PC-3 (cell line): ENCODE measurements at regions of chr2 and their contacts with region 1.

Region 1: GRCh38 chr2:219206442-219207253 is at the start of gene ZFAND2B:
- DNase-seq: peak; percentile 97
- ATAC-seq: peak; percentile 93
- H3K4me3 ChIP-seq: peak within 1 kb of the TSS; percentile 66
- H3K27ac ChIP-seq: peak within 1 kb of the TSS; percentile 69
- H3K4me1 ChIP-seq: peaks cover 20% of the 10 kb centered on the region
- H3K27me3 ChIP-seq: no peaks in the 10 kb centered on the region
- CTCF ChIP-seq: no peak
- total RNA-seq, gene ZFAND2B: 47.5 and 49.5 TPM in 2 replicates

Region 2: DNA sequence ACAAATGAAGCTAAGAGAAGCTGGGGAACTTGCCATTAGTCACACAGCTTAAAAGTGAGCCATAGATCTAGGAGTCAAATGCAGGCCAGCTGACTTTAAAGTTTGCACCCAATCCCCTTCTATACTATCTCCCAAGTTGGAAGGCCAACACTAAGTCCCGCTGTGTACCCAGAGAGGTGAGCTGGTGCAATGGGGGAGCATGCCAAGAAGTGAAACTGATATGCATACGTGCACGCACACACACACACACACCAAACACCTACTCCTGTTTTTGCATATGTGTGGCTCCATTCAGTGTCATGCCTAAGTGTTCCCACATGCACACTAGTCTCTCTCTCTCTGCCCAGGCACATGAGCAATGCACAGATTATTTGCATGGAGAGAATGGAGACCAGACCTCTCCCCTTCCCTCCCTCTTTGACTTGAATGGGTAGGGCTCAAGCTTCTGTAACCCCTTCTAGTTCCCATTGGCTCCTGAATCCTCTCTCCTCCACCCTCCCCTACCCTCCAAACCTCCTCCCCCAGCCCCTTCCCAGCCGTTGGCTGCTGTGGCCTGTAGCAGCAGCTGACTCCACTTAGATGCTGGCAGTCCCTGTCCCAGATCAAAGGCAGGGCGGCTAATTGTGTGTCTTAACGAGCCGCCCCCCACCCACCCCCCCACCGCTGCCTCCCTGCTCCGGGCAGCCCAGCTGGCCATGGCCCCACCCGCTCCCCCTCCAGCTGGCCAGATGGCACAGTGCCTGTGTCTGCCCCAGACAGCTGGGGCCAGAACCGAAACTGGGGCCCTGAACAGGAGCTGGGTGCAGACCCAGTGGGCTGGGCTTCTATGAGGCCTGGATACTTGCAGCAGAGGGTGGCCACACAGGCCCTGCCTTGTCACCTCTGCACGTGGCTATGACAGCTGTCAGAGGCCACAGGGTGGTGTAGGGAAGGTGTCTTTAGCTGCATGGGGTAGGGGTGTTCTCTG is 320.4 kb before region 1 on chr2:
- CTCF ChIA-PET with region 1: no interaction called
- POLR2A ChIA-PET with region 1: no interaction called
- intact Hi-C with region 1: no loop called
- DNase-seq: no peak
- ATAC-seq: no peak
- H3K4me3 ChIP-seq: no peak overlapping the region
- H3K27ac ChIP-seq: no peak overlapping the region
- H3K4me1 ChIP-seq: no peaks in the 10 kb centered on the region
- H3K27me3 ChIP-seq: no peaks in the 10 kb centered on the region
- CTCF ChIP-seq: no peak

Region 3: GRCh38 chr2:219126551-219126950 is 80.1 kb before region 1 on chr2:
- CTCF ChIA-PET with region 1: no interaction called
- POLR2A ChIA-PET with region 1: no interaction called
- intact Hi-C with region 1: no loop called
- DNase-seq: peak; percentile 76
- ATAC-seq: peak; percentile 64
- H3K4me3 ChIP-seq: no peak overlapping the region
- H3K27ac ChIP-seq: peak overlapping the region; percentile 76
- H3K4me1 ChIP-seq: peaks cover 70% of the 10 kb centered on the region
- H3K27me3 ChIP-seq: no peaks in the 10 kb centered on the region
- CTCF ChIP-seq: no peak

Region 4: GRCh38 chr2:219160186-219161017 is 46.2 kb before region 1 on chr2 and contains the start of gene NHEJ1:
- CTCF ChIA-PET with region 1: no interaction called
- POLR2A ChIA-PET with region 1: interaction called, 4 read pairs
- intact Hi-C with region 1: loop called (anchors 1 kb)
- DNase-seq: peak; percentile 92
- ATAC-seq: peak; percentile 91
- H3K4me3 ChIP-seq: peak within 1 kb of the TSS; percentile 79
- H3K27ac ChIP-seq: peak within 1 kb of the TSS; percentile 62
- H3K4me1 ChIP-seq: peaks cover 26% of the 10 kb centered on the region
- H3K27me3 ChIP-seq: no peaks in the 10 kb centered on the region
- CTCF ChIP-seq: peak; percentile 90
- total RNA-seq, gene NHEJ1: 16.7 and 18.5 TPM in 2 replicates

Region 5: GRCh38 chr2:219177552-219178376 is 28.9 kb before region 1 on chr2 and contains the start of gene RETREG2:
- CTCF ChIA-PET with region 1: no interaction called
- POLR2A ChIA-PET with region 1: interaction called, 3 read pairs
- intact Hi-C with region 1: loop called (anchors 1 kb)
- DNase-seq: peak; percentile 87
- ATAC-seq: peak; percentile 70
- H3K4me3 ChIP-seq: peak within 1 kb of the TSS; percentile 83
- H3K27ac ChIP-seq: peak within 1 kb of the TSS; percentile 94
- H3K4me1 ChIP-seq: peaks cover 24% of the 10 kb centered on the region
- H3K27me3 ChIP-seq: no peaks in the 10 kb centered on the region
- CTCF ChIP-seq: no peak; the same call in 1 of the 2 replicates
- total RNA-seq, gene RETREG2: 61.0 and 87.2 TPM in 2 replicates

Region 6: GRCh38 chr2:219218732-219219701 is 12.4 kb after region 1 on chr2 and contains the start of gene ABCB6:
- CTCF ChIA-PET with region 1: no interaction called
- POLR2A ChIA-PET with region 1: no interaction called
- intact Hi-C with region 1: loop called (anchors 1 kb)
- DNase-seq: peak; percentile 83
- ATAC-seq: peak; percentile 66
- H3K4me3 ChIP-seq: peak within 1 kb of the TSS; percentile 69
- H3K27ac ChIP-seq: peak within 1 kb of the TSS; percentile 77
- H3K4me1 ChIP-seq: peaks cover 19% of the 10 kb centered on the region
- H3K27me3 ChIP-seq: no peaks in the 10 kb centered on the region
- CTCF ChIP-seq: no peak
- total RNA-seq, gene ABCB6: 21.1 and 23.9 TPM in 2 replicates

Region 7: GRCh38 chr2:219369447-219369861 is 162.8 kb after region 1 on chr2:
- CTCF ChIA-PET with region 1: interaction called, 11 read pairs
- POLR2A ChIA-PET with region 1: no interaction called
- intact Hi-C with region 1: no loop called
- DNase-seq: peak; percentile 42
- ATAC-seq: peak; percentile 46
- H3K4me3 ChIP-seq: no peak overlapping the region
- H3K27ac ChIP-seq: no peak overlapping the region
- H3K4me1 ChIP-seq: no peaks in the 10 kb centered on the region
- H3K27me3 ChIP-seq: no peaks in the 10 kb centered on the region
- CTCF ChIP-seq: no peak